Naive thymus-derived CD4-positive, alpha-beta T cell (primary cell): ENCODE measurements at regions of chr10 and their contacts with region 1.

Region 1: DNA sequence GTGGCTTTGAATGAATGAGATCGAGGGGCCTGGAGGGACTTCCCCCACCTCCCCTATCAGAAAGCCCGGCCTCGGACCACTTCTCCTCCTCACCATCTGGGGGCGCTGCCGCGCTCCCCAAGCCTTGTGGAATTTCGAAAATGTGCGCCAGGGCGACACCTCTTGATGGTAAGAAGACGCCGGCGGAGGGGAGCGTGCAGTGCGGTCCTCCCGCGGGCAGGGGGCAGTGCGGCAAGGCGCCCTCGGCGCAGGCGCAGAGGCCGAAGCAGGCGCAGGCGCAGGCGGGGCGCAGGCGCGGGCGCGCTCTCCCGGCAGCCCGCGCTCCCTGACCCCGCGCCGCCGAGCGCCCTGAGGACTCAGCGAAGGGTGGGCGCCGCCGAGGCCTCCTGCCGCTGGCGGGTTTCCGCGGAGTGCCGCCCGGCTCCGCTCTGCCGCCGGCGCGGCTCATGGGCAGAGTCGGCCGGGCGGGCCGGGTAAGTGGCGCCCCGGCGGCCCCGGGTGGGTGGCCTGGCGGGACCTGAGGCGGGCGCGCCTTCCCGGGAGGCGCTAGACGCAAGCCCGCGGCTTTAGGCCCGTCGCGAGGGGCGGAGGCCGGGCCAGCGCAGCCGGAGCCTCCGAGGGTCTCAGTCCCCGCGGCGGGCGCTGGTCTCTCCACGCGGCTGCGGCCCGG is at the start of gene RBM17:
- DNase-seq: peak; percentile 94 to 100 (median 99)
- ATAC-seq: peak; percentile 95
- H3K4me3 ChIP-seq: peak within 1 kb of the TSS; percentile 85
- H3K4me3 Mint-ChIP-seq: peak within 1 kb of the TSS; percentile 84 to 100 (median 94)
- H3K27ac ChIP-seq: peak within 1 kb of the TSS; percentile 84
- H3K27ac Mint-ChIP-seq: peak within 1 kb of the TSS; percentile 77 to 91 (median 87)
- H3K4me1 ChIP-seq: peaks cover 26 to 49% of the 10 kb centered on the region in 2 donors
- H3K4me1 Mint-ChIP-seq: peaks cover 46 to 77% (median 67%) of the 10 kb centered on the region in 7 donors
- H3K27me3 ChIP-seq: no peaks in the 10 kb centered on the region
- H3K27me3 Mint-ChIP-seq: no peaks in the 10 kb centered on the region
- total RNA-seq, gene RBM17: 120 to 158 (median 127) TPM

Region 2: DNA sequence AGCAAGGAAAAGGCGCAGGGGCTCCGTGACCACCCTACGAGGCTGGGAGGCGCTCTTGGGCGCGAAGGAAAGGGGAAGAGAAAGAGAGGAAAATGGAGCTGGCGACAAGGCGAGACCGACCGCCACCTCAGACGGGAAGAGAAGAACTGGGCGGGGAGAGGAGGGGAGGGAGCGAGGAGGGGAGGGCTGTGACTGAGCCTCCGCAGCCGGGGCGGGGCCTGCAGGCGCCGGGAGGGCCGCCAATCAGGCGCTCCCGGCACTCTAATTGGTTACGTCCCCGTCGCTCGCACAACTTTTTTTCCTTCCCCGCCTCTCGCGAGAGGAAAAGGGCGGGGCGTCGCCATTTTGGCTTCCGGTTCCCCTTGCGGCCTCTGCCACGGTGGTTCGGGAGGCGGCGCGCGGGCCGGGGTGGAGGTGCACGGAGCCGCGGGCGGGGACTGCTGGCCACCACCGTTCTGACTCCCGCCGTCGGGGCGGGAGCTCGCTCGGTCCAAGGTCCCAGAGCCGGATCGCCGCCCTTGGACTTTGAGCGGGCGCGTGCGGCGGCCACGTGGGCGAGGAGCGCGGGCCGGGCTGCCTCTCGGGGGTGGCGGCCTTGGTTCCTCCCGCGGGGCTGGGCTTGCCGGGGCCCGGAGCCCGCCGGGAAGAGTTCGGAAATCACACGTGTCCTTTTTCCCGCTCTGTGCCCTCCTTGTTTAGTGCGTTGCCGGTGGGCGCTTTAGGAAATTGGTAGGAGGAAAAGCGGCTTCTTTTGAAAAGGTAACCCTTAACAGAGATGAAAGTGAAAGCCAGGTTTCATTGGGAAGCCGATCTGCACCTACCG is 275.4 kb before region 1 on chr10 and contains the start of gene GDI2:
- CTCF ChIA-PET with region 1: no interaction called
- POLR2A ChIA-PET with region 1: no interaction called
- intact Hi-C with region 1: loop called (anchors 1 to 5 kb)
- DNase-seq: peak; percentile 94 to 98 (median 97)
- ATAC-seq: peak; percentile 98
- H3K4me3 ChIP-seq: peak within 1 kb of the TSS; percentile 86
- H3K4me3 Mint-ChIP-seq: peak within 1 kb of the TSS; percentile 85 to 95 (median 93)
- H3K27ac ChIP-seq: peak within 1 kb of the TSS; percentile 99
- H3K27ac Mint-ChIP-seq: peak within 1 kb of the TSS; percentile 85 to 98 (median 95)
- H3K4me1 ChIP-seq: peaks cover 27 to 37% of the 10 kb centered on the region in 2 donors
- H3K4me1 Mint-ChIP-seq: peaks cover 49 to 71% (median 67%) of the 10 kb centered on the region in 7 donors
- H3K27me3 ChIP-seq: no peaks in the 10 kb centered on the region
- H3K27me3 Mint-ChIP-seq: no peaks in the 10 kb centered on the region
- total RNA-seq, gene GDI2: 85.3 to 236 (median 121) TPM

Region 3: GRCh38 chr10:5977471-5978229 is 111.2 kb before region 1 on chr10 and contains the start of gene IL15RA:
- CTCF ChIA-PET with region 1: no interaction called
- POLR2A ChIA-PET with region 1: interaction called, 3 read pairs
- intact Hi-C with region 1: loop called in 1 of 2 experiments (anchors 1 kb)
- DNase-seq: peak; percentile 60 to 89 (median 71)
- ATAC-seq: peak; percentile 84
- H3K4me3 ChIP-seq: peak within 1 kb of the TSS; percentile 97
- H3K4me3 Mint-ChIP-seq: peak within 1 kb of the TSS; percentile 89 to 98 (median 96)
- H3K27ac ChIP-seq: peak within 1 kb of the TSS; percentile 74
- H3K27ac Mint-ChIP-seq: peak within 1 kb of the TSS; percentile 85 to 97 (median 89)
- H3K4me1 ChIP-seq: peaks cover 0 to 6% of the 10 kb centered on the region in 2 donors
- H3K4me1 Mint-ChIP-seq: peaks cover 12 to 36% (median 21%) of the 10 kb centered on the region in 7 donors
- H3K27me3 ChIP-seq: no peaks in the 10 kb centered on the region
- H3K27me3 Mint-ChIP-seq: peaks cover 0 to 21% (median 0%) of the 10 kb centered on the region in 5 donors
- total RNA-seq, gene IL15RA: 3.5 to 24.9 (median 5.6) TPM

Region 4: GRCh38 chr10:6050801-6051445 is 37.9 kb before region 1 on chr10:
- CTCF ChIA-PET with region 1: interaction called, 52 read pairs
- POLR2A ChIA-PET with region 1: interaction called, 27 read pairs
- intact Hi-C with region 1: loop called (anchors 1 kb)
- DNase-seq: peak; percentile 62 to 98 (median 90)
- ATAC-seq: peak; percentile 92
- H3K4me3 ChIP-seq: peak overlapping the region; percentile 49
- H3K4me3 Mint-ChIP-seq: peak overlapping the region; percentile 78 to 98 (median 92)
- H3K27ac ChIP-seq: peak overlapping the region; percentile 79
- H3K27ac Mint-ChIP-seq: peak overlapping the region; percentile 94 to 99 (median 97)
- H3K4me1 ChIP-seq: peaks cover 52 to 54% of the 10 kb centered on the region in 2 donors
- H3K4me1 Mint-ChIP-seq: peaks cover 54 to 90% (median 85%) of the 10 kb centered on the region in 7 donors
- H3K27me3 ChIP-seq: no peaks in the 10 kb centered on the region
- H3K27me3 Mint-ChIP-seq: no peaks in the 10 kb centered on the region

Region 5: GRCh38 chr10:6077071-6077675 is 11.7 kb before region 1 on chr10:
- CTCF ChIA-PET with region 1: interaction called, 59 read pairs
- POLR2A ChIA-PET with region 1: interaction called, 52 read pairs
- intact Hi-C with region 1: loop called in 1 of 2 experiments (anchors 1 kb)
- DNase-seq: no peak
- ATAC-seq: no peak
- H3K4me3 ChIP-seq: no peak overlapping the region
- H3K4me3 Mint-ChIP-seq: no peak overlapping the region
- H3K27ac ChIP-seq: no peak overlapping the region
- H3K27ac Mint-ChIP-seq: no peak overlapping the region
- H3K4me1 ChIP-seq: peaks cover 0 to 7% of the 10 kb centered on the region in 2 donors
- H3K4me1 Mint-ChIP-seq: peaks cover 8 to 50% (median 28%) of the 10 kb centered on the region in 7 donors
- H3K27me3 ChIP-seq: no peaks in the 10 kb centered on the region
- H3K27me3 Mint-ChIP-seq: no peaks in the 10 kb centered on the region

Region 6: GRCh38 chr10:6401562-6402348 is 312.9 kb after region 1 on chr10:
- CTCF ChIA-PET with region 1: interaction called, 7 read pairs
- POLR2A ChIA-PET with region 1: interaction called, 5 read pairs
- intact Hi-C with region 1: loop called in 1 of 2 experiments (anchors 1 kb)
- DNase-seq: peak in 8 of 9 donors; percentile 49 to 74 (median 66)
- ATAC-seq: peak; percentile 87
- H3K4me3 ChIP-seq: no peak overlapping the region
- H3K4me3 Mint-ChIP-seq: peak overlapping the region in 9 of 10 donors; percentile 0 to 49 (median 38)
- H3K27ac ChIP-seq: no peak overlapping the region
- H3K27ac Mint-ChIP-seq: peak overlapping the region in 8 of 9 donors; percentile 4 to 82 (median 56)
- H3K4me1 ChIP-seq: peaks cover 0 to 11% of the 10 kb centered on the region in 2 donors
- H3K4me1 Mint-ChIP-seq: peaks cover 4 to 33% (median 18%) of the 10 kb centered on the region in 7 donors
- H3K27me3 ChIP-seq: no peaks in the 10 kb centered on the region
- H3K27me3 Mint-ChIP-seq: peaks cover 0 to 13% (median 0%) of the 10 kb centered on the region in 5 donors